Panc1 (cell line): ENCODE measurements at regions of chr11 and their contacts with region 1.

Region 1: DNA sequence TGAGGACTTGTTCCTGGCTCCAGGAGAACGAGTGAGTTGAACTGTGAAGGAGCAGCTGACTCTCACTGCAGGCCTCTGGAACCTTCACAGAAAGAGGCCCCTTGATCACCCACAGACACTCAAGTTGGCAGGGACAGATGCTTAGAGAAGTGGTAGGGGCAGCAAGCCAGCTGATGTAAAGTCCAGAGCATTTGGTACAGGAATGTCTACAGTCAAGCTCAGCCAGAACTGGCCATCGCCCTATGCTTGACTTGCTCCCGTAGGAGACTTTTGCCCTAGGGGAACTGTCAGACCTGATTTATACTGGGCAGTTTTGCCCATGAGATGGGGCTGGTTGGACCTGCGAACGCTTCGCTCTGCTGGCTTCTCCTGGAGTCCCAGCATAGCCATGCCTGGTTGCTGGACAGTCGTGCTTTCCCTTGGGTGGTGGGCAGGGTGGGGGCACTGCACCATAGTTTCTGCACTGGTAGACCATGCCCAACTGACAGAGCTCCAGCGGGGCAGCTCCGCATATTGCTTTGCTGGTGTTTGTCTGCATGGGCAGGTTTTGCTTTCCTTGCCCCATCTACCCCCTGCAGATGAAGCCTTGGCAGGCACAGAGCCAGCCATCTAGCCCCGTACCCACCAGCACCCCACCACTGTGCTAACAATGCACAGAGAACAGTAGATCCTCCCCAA is 977.7 kb downstream of the JRKL start:
- DNase-seq: no peak
- ATAC-seq: no peak
- H3K4me3 ChIP-seq: no peak overlapping the region
- H3K27ac ChIP-seq: no peak overlapping the region
- H3K4me1 ChIP-seq: no peaks in the 10 kb centered on the region
- H3K27me3 ChIP-seq: no peaks in the 10 kb centered on the region
- CTCF ChIP-seq: no peak

Region 2: GRCh38 chr11:96506953-96507354 is 860.6 kb before region 1 on chr11:
- CTCF ChIA-PET with region 1: no interaction called
- POLR2A ChIA-PET with region 1: interaction called, 11 read pairs
- in situ Hi-C with region 1: no loop called
- intact Hi-C with region 1: no loop called
- DNase-seq: no peak
- ATAC-seq: no peak
- H3K4me3 ChIP-seq: no peak overlapping the region
- H3K27ac ChIP-seq: no peak overlapping the region
- H3K4me1 ChIP-seq: no peaks in the 10 kb centered on the region
- H3K27me3 ChIP-seq: 0 out of 2 replicates have a peak, but pooled peaks cover 4% of the 10 kb centered on the region
- CTCF ChIP-seq: no peak

Region 3: GRCh38 chr11:97107604-97108003 is 259.9 kb before region 1 on chr11:
- CTCF ChIA-PET with region 1: no interaction called
- POLR2A ChIA-PET with region 1: no interaction called
- in situ Hi-C with region 1: no loop called
- intact Hi-C with region 1: no loop called
- DNase-seq: no peak
- ATAC-seq: no peak
- H3K4me3 ChIP-seq: no peak overlapping the region
- H3K27ac ChIP-seq: no peak overlapping the region
- H3K4me1 ChIP-seq: no peaks in the 10 kb centered on the region
- H3K27me3 ChIP-seq: no peaks in the 10 kb centered on the region
- CTCF ChIP-seq: no peak